OCI-LY7 (cell line): ENCODE measurements at regions of chr3 and their contacts with region 1.

Region 1: DNA sequence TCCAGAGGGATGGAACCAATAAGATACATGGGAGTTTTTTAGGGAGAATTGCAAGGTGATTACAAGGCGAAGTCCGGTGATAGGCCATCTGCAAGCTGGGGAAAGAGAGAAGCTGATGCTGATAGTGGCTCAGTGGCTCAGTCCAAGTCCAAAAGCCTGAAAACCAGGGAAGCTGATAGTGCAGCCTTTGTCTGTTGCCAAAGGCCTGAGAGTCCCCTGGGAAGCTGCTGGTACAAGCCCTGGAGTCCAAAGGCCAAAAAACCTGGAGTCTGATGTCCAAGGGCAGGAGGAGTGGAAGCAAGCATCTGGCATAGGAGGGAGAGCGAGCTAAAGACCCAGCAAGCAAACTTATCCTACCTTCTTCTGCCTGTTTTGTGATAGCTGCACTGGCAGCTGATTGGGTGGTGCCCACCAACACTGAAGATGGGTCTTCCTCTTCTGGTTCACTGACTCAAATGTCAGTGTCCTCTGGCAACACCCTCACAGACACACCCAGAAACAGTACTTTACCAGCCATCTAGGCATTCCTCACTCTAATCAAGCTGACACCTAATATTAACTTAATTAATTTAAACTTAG is 16.7 kb downstream of the TFG start:
- DNase-seq: no peak
- H3K4me3 ChIP-seq: no peak overlapping the region
- H3K27ac ChIP-seq: no peak overlapping the region
- H3K4me1 ChIP-seq: no peaks in the 10 kb centered on the region
- CTCF ChIP-seq: no peak

Region 2: GRCh38 chr3:100737334-100737733 is 11.3 kb after region 1 on chr3:
- CTCF ChIA-PET with region 1: no interaction called
- POLR2A ChIA-PET with region 1: interaction called, 14 read pairs
- intact Hi-C with region 1: no loop called
- DNase-seq: peak; percentile 7
- H3K4me3 ChIP-seq: no peak overlapping the region
- H3K27ac ChIP-seq: no peak overlapping the region
- H3K4me1 ChIP-seq: no peaks in the 10 kb centered on the region
- CTCF ChIP-seq: peak; percentile 67

Region 3: DNA sequence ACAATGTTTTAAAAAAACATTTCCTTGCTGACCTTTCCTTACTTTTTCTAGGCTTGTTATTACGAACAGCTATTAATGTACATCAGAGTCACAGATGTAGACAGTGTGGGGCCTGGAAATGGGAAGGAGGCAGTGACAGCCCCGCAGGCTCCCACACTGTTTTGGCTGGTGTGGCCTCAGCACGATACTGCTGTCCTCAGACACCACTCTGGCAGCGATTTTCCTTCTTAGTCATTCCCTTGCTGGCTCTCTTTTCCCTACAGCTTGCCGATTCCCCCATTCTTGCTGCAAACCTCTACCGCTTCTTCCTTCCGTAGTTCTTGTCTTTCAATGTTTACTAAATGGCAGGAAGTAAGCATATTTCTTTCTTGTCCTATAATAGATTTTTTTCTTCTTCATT is 154.0 kb after region 1 on chr3:
- CTCF ChIA-PET with region 1: no interaction called
- POLR2A ChIA-PET with region 1: no interaction called
- intact Hi-C with region 1: no loop called
- DNase-seq: no peak
- H3K4me3 ChIP-seq: no peak overlapping the region
- H3K27ac ChIP-seq: no peak overlapping the region
- H3K4me1 ChIP-seq: no peaks in the 10 kb centered on the region
- CTCF ChIP-seq: no peak